AG04449 (cell line): ENCODE measurements at regions of chr15 and their contacts with region 1.

Region 1: DNA sequence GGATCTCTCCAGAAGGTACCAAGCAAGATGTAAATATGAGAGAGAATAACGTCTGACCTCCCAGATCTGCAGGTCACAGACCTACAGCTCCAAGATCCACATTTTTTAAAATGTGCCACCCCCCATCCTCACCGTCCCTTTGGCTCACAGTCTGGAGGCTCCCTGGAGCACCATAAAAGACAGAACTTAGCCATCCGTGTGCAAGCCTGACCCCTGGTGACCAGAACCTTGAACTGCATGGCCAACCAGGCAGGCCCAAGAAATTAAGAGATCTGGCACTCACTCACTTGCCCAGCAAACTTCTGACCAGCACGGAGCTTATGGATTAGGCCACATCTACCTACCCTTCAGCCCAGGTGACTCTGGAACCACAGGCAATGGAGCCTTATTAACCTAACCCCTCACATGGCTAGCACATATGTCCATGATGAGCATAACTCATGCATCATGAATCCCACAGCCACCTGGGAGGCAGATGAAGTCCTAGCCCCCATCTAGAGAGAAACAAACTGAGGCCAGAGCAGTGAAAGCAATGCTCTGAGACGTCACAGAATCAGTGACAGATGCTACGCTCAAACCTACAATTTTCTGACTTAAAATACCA is 275.3 kb downstream of the UACA start:
- DNase-seq: no peak
- H3K4me3 ChIP-seq: no peak overlapping the region
- CTCF ChIP-seq: peak; percentile 92

Region 2: GRCh38 chr15:69475769-69476358 is 1012.2 kb before region 1 on chr15:
- CTCF ChIA-PET with region 1: interaction called, 108 read pairs
- POLR2A ChIA-PET with region 1: no interaction called
- DNase-seq: no peak
- H3K4me3 ChIP-seq: no peak overlapping the region
- CTCF ChIP-seq: peak; percentile 92

Region 3: DNA sequence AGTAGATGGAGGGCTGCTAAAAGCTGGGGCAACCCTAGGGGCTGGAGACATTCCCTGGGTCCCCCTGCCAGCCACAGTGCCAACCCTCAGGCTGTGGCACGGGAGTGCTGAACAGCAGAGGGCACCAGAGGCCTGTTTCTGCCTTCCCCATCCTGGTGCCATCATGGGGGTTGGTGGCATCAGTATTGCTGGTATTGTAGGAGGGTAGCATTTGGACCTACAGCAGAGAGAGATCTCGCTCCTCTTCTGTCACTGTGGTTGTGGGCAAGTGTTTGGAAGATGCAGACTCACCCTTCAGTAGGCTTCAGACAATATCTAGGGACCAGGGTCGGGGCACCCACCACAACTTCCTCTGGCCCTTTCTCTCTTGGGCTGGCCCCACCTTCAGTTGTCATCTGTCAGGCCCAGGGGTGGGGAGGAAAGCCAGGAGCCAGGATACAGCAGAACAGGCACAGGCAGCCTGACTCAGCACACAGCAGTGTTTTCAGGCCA is 912.0 kb before region 1 on chr15:
- CTCF ChIA-PET with region 1: interaction called, 16 read pairs
- POLR2A ChIA-PET with region 1: no interaction called
- DNase-seq: no peak
- H3K4me3 ChIP-seq: no peak overlapping the region
- CTCF ChIP-seq: peak; percentile 85

Region 4: DNA sequence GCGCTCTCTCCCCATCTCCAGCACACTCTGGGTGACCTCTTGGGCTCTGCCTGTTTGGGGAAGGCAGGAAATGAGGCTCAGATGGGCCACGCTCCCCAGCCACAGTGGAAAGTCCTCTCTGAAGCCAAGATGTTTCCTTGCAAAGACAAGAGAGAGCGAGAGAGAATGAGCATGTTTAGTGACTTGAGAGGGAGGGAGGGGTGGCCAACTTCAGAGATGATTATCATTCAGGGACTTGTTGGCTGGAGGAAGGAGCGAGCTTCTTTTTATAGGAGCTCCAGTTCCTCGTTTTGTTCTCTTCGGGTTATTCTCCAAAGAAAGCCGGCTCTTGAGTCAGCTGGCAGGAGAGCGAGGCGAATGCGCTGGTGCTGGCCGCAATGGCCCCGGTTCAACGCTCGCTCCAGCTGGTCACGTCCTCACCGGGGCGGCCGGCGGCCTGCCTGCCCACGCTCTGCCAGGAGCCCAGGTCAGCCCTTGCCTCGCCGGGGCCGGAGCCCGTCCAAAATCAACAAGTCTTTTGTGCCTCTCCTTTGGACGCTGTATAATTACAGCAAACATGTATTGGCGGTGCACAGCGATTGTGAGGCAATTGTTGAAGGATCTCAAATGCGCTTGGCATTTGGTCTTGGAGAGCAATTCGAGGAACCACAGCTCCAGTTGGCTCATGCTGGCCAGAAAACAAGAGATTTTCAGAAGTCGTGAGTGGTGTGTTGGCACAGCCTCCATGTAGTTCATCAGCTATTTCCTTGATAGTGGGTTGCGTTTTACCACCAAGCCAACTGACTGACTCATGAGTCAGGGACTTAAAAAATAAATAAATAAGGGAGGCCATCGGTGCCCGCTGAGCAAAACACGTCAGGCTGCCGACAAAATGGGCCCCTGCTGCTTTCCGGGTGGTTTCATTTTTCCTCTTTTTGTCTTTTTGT is 13.4 kb before region 1 on chr15:
- CTCF ChIA-PET with region 1: interaction called, 58 read pairs
- POLR2A ChIA-PET with region 1: no interaction called
- DNase-seq: peak; percentile 76
- H3K4me3 ChIP-seq: no peak overlapping the region
- CTCF ChIP-seq: no peak

Region 5: DNA sequence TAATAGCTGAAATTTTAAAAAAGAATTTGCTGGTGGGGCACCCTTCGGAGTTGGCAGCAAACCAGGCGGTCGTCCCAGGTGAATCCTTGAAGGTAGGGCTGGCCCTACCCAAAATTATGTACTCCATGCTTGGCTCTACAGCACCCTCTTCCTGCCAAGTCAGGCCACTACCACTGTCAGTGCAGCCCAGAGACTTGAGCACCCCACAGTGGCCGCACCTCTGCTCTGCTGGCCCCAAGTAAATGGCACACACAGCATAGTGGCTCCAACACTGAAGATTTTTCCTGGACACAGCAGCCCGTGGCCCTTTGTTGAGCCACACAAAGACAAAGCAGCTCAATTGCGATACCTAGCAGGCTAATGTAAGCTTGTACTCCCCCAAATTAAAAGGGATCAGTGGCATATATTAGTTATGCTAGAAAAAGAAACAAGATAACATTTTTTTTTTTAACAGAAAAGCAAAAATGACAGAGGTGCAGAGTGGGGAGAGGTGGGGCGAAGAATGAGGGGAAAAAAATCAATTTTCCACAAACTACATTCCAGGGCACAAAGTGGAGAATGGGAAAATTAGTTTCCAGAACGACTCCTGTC is 24.8 kb after region 1 on chr15:
- CTCF ChIA-PET with region 1: interaction called, 10 read pairs
- POLR2A ChIA-PET with region 1: no interaction called
- DNase-seq: no peak
- H3K4me3 ChIP-seq: no peak overlapping the region
- CTCF ChIP-seq: peak; percentile 62